ENCODE measurements at regions of chr2 and their contacts with region 1.

Region 1: GRCh38 chr2:236569573-236569973 is at the start of gene ACKR3:
- DNase-seq: peak; percentile 70 to 88 (median 80)
- ATAC-seq: peak; percentile 91
- H3K4me3 ChIP-seq: peak within 1 kb of the TSS; percentile 20 to 44
- H3K27ac ChIP-seq: peak within 1 kb of the TSS; percentile 67 to 78
- H3K4me1 ChIP-seq: peaks cover 12 to 42% of the 10 kb centered on the region in 2 donors
- H3K27me3 ChIP-seq: peaks cover 0 to 27% of the 10 kb centered on the region in 2 donors
- CTCF ChIP-seq: peak; percentile 13 to 18
- polyA plus RNA-seq, gene ACKR3: 32.0 to 49.3 (median 34.9) TPM

Region 2: GRCh38 chr2:236195726-236196125 is 373.8 kb before region 1 on chr2:
- intact Hi-C with region 1: no loop called
- DNase-seq: no peak
- ATAC-seq: no peak
- H3K4me3 ChIP-seq: no peak overlapping the region
- H3K27ac ChIP-seq: no peak overlapping the region
- H3K4me1 ChIP-seq: no peaks in the 10 kb centered on the region
- H3K27me3 ChIP-seq: no peaks in the 10 kb centered on the region
- CTCF ChIP-seq: no peak

Region 3: DNA sequence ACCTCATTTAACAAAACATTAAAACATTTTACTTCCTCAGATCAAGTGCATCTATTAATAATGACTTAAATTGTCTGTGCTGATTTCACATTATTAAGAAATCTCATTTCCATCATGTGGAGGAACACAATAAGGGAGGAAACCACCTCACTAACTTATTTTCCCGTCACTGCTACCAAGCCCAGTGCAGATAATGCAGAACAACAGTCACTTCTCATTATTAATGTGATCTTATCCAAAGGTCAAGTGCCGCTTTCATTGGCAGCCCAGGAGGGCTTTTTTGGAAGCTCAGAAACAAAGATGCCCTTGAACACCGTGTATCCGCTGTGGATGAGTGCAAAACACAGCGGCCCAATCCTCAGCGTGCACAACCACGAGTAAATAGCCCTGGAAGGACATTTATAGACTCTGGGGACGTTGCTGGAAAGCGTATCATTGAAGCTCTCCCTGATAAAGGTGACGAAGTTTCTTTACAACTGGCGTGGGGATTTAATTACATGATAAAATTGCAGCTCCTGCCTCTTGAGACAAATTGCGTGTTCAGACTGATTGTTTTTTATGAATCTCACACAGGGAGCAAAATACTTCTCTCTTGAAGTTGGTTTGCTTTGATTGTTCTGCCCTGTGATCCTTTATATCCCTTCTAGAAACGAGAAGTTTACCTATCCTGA is 318.5 kb before region 1 on chr2:
- intact Hi-C with region 1: no loop called
- DNase-seq: no peak
- ATAC-seq: no peak
- H3K4me3 ChIP-seq: no peak overlapping the region
- H3K27ac ChIP-seq: no peak overlapping the region
- H3K4me1 ChIP-seq: no peaks in the 10 kb centered on the region
- H3K27me3 ChIP-seq: no peaks in the 10 kb centered on the region
- CTCF ChIP-seq: no peak

Region 4: DNA sequence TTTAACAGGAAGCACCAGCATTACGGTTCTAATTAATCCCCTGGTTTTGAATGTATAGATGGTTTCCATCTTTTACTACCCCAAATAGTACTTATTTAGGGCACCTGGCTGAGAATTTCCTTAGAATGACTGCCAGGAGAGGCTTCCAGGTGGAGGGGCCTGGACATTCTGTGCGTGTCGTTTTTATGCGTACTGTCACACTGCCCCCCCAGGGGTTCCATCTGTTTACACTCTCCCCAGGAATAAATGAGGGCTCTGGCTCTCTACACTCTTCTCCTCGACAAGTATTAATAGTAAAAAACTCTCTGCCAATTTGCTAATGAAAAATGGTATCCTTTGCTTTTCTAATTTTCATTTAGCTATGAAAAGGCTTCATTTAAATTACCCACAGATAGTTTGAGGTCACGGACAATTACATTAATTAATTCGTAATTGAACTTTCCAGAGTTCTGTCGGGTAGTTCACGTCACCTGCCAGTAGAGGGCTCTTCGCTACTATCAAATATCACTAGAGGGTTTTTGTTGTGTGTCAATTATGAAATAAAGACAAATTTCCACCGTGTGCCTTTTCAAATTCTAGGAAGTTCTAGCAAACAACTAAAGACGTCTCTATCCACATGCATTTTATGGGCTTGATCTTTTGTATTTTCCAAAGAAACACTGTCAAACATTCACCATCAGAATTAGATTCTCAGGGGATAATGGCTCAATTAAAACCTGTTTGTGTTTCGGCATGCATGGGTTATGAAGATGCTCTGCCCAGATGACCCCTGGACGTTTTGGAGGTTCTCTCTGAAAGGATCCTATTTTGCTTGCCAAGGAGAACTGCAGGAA is 216.6 kb before region 1 on chr2:
- intact Hi-C with region 1: loop called in 1 of 2 experiments (anchors 10 kb)
- DNase-seq: no peak
- ATAC-seq: peak; percentile 72
- H3K4me3 ChIP-seq: no peak overlapping the region
- H3K27ac ChIP-seq: no peak overlapping the region
- H3K4me1 ChIP-seq: no peaks in the 10 kb centered on the region
- H3K27me3 ChIP-seq: no peaks in the 10 kb centered on the region
- CTCF ChIP-seq: peak; percentile 71 to 73

Region 5: DNA sequence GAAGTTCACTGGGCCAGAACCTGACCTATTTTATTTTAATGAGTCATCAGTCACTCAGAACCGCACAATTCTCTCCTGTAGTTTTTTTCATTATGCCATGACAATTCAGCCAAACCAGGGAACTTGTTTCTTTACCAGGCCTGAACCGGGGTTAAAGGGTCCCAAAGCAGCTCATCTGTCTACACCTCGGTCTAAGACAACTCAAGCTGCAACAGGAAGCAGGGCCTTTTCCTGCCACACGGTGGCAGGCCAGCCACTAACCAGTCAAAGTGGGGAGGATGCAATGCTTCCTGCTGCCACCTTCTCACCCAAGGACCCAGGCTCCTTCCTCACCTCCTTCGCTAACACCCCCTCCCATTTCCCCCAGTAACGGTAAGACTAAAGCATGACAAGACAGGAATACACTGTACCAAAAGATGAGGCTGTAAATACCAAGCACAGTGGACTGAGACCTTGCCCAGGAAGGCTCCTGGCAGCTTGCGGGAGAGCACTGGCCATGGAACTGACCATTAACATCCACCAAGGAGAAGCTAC is 56.6 kb before region 1 on chr2:
- intact Hi-C with region 1: loop called in 1 of 2 experiments (anchors 10 kb)
- DNase-seq: peak; percentile 44 to 86 (median 58)
- ATAC-seq: peak; percentile 93
- H3K4me3 ChIP-seq: no peak overlapping the region
- H3K27ac ChIP-seq: no peak overlapping the region
- H3K4me1 ChIP-seq: peaks cover 2 to 6% of the 10 kb centered on the region in 2 donors
- H3K27me3 ChIP-seq: peaks cover 0 to 12% of the 10 kb centered on the region in 2 donors
- CTCF ChIP-seq: peak; percentile 65 to 88

Region 6: DNA sequence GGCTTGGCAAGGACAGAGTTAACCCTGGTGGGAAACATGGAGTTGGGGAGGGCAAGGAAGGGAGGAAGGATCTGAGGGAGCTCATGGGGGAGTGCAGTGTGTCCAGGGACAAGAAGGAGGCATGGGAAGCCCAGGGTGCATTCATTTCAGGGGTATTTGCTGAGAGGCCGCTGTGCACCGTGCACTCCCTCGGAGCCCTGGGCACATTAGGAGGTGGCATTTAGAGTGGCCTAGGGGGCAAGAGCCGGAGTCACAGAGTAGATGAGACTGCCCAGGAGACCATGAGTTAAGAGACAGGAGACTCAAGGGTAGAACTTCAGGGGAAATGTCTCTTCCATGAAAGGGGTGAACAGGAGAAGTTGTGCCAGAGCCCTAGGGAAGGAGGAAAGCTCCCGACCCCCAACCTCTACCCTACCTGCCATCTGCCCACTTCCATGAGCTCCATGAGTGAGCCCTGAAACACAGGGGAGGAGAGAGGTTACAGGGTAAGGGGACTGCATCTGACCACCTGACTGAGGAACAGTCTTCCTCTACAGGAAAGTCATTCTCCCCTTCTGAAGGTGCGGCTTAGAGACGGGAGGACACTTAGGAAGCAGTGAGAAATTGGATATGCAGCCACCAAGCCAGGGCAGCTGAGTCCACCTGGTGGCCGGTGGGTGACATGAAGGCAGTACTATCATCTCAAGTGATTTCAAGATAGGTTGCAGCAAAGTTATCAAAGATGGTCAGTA is 457.6 kb after region 1 on chr2:
- intact Hi-C with region 1: no loop called
- DNase-seq: peak; percentile 62 to 88 (median 74)
- ATAC-seq: peak; percentile 96
- H3K4me3 ChIP-seq: no peak overlapping the region
- H3K27ac ChIP-seq: no peak overlapping the region
- H3K4me1 ChIP-seq: peaks cover 0 to 5% of the 10 kb centered on the region in 2 donors
- H3K27me3 ChIP-seq: no peaks in the 10 kb centered on the region
- CTCF ChIP-seq: peak; percentile 65 to 76

Measured in left lung (tissue), 14 donors.